Dendritic cell treated with granulocyte-macrophage colony-stimulating factor and Interleukin-4, amounts not matched to agents 40 ng/mL and 50 ng/mL, for 4 days (primary cell): ENCODE measurements at regions of chr6 and their contacts with region 1.

Region 1: DNA sequence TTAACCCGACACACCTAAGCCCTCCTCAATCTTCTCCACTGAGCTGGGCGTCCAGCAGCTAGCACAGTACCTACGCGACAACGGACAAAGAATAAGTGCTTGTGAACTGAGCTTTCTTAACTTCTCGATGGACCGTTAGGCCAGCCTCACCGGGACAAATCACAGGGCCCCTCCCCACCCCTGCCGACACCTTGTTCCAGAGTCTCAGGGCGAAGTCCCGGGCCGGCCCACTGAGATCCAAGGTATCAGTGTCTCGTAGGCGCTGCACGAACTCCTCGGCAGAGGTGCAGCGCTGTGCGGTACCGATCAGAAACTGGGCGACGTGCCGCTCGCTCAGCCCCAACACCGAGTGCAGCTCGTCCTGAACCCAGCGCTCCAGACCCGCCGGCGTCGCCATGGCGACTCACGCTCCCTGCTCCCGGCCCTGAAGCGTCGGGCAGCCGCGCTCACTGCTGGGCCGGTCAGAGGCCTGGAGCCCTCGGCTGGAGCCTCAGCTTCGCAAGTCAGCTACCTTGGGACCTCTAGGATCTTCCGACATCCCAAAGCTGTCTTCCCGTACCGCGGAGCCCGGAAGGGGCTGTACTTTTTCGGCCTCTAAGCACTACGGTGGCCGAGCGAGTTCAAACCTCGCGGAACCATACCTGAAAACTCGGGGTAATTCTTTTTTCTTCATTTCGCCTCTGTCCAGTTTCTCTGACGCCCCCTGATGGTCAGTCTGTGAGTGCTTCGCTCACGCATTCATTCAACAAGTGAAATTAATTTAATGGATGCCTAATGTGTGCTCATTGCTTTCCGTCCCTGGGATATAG is at the start of gene DHX16:
- H3K4me3 Mint-ChIP-seq: peak within 1 kb of the TSS; percentile 89
- H3K27ac Mint-ChIP-seq: peak within 1 kb of the TSS; percentile 80
- H3K4me1 Mint-ChIP-seq: peaks cover 46% of the 10 kb centered on the region
- H3K27me3 Mint-ChIP-seq: no peaks in the 10 kb centered on the region

Region 2: GRCh38 chr6:30626484-30627366 is 45.9 kb before region 1 on chr6 and contains the start of gene ATAT1:
- intact Hi-C with region 1: loop called (anchors 5 kb)
- H3K4me3 Mint-ChIP-seq: peak within 1 kb of the TSS; percentile 85
- H3K27ac Mint-ChIP-seq: peak within 1 kb of the TSS; percentile 90
- H3K4me1 Mint-ChIP-seq: peaks cover 36% of the 10 kb centered on the region
- H3K27me3 Mint-ChIP-seq: no peaks in the 10 kb centered on the region

Region 3: GRCh38 chr6:31007694-31008093 is 335.0 kb after region 1 on chr6:
- intact Hi-C with region 1: no loop called
- H3K4me3 Mint-ChIP-seq: no peak overlapping the region
- H3K27ac Mint-ChIP-seq: no peak overlapping the region
- H3K4me1 Mint-ChIP-seq: peaks cover 15% of the 10 kb centered on the region
- H3K27me3 Mint-ChIP-seq: peaks cover 27% of the 10 kb centered on the region